Right ventricle myocardium inferior (tissue), 1 donor: ENCODE measurements at regions of chr10 and their contacts with region 1.

Region 1: GRCh38 chr10:18238870-18239485 is 98.8 kb downstream of the CACNB2 start:
- DNase-seq: no peak
- ATAC-seq: no peak

Region 2: DNA sequence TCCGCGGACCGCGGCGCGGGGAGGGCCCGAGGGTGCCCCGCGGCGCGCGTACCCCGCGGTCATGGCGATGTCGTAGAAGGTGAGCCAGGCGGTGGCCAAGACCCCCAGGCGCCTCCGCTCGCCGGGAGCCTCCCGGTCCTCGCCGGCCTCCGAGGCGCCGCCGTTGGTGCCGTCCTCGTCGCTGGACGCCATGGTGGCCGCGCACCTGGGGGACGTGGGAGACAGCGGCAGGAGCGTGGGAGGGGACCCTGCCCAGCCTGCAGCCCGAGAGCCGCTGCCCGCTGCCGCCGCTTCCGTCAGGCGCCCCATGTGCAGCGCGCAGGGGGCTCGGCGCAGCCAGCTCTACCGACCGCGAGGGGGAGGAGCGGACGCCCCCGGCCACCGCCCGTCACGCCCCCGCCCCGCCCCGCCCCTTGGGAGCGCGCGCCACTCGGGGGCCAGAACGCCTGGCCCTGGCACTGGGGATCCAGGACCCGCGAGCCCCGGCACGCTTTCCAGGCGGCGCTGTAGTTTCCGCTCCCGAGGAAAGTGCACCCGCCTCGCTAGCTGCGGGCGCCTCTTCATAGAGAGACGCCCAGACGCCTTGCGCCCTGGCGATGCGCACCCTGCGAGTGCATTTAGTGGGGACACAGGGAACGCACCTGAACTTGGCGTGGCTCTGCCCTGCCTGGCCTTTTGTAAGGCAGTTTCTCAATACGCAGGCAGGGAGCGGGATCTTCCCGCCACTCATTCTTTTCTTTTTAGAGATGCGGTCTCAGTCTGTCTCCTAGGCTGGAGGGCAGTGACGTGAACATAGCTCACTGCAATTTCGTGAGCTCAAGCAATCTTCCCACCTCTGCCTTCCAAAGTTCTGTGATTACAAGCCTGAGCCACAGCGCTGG is 621.7 kb before region 1 on chr10 and contains the start of gene HACD1:
- intact Hi-C with region 1: loop called (anchors 10 kb)
- DNase-seq: peak; percentile 82
- ATAC-seq: peak; percentile 87
- total RNA-seq, gene HACD1: 157 TPM

Region 3: DNA sequence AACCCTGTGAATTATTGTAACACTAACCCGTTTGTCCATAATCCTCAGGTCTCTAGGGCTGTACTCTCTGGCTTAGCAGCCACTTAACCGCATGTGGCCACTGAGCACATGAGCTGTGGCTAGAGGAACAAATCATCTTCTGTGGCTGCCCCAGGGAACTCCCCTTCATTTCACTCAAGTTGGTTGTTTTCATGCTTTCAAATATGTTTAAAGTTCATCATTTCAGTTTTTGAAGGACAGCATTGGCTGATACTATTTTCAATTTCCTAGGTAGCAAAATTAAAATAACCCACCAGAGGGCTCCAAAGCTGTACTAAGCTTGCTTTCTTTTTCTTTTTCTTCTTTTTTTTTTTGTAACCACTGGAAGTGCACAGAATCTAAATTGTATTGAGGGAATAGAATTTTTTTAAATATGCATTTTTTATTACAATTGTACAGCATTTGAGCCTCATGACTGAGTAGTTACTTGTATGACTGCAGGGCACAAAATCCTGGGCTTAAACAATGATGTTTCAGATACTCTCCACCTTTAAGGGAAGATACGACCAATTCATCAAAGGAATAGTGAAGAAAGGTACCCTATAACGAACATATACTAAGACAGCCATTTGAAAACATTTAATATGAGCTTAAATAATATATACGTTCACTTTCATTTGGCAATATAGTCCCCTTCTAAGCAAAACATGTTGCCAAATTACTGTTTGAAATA is 391.2 kb before region 1 on chr10:
- intact Hi-C with region 1: loop called (anchors 5 kb)
- DNase-seq: no peak
- ATAC-seq: no peak